Ascending aorta (tissue), 2 donors: ENCODE measurements at regions of chr14 and their contacts with region 1.

Region 1: GRCh38 chr14:90527978-90528377 is 131.1 kb downstream of the CALM1 start:
- DNase-seq: no peak
- H3K4me3 ChIP-seq: no peak overlapping the region
- H3K27ac ChIP-seq: no peak overlapping the region
- H3K4me1 ChIP-seq: peaks cover 15 to 19% of the 10 kb centered on the region in 2 donors
- H3K27me3 ChIP-seq: no peaks in the 10 kb centered on the region
- CTCF ChIP-seq: no peak

Region 2: DNA sequence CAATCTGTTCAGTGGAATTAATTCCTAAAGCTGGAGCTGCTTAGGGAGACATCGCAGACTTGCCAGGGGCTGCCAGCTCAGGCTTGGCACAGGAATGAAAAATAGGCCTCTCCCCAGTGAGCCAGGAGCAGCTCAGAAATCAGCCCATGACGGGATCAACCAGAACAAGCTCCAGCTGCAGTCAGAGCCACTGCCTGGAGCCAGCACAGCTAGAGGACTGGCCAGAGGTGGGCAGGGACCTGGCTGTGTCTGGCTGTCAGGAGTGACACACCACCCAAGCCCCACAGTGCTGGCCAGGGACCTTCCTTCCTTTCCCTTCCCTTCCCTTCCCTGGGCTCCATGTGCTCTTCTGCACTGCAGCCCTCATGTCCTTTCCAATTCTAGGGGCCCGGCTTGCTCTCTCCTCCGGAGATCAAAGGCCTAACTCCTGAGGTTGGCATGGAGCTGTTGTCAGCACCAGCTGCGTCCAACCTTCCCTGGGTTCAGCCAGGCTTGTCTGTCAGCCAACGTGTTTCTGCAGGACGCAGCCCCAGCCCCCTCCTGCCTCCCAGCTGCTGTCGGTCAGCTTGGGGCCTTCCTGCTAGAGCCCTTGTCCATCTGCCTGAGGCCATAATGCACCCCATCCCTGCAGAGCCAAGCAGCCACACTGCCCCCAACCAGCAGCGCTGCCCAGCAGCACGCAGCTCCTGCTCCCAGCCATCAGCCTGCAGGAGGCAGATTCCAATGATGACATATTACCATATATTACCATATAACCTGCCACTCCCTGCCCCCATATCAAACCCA is 18.2 kb after region 1 on chr14:
- intact Hi-C with region 1: loop called (anchors 2 kb)
- DNase-seq: peak; percentile 41 to 88
- H3K4me3 ChIP-seq: peak overlapping the region in 1 of 2 donors; percentile 19
- H3K27ac ChIP-seq: peak overlapping the region; percentile 83 to 84
- H3K4me1 ChIP-seq: peaks cover 12 to 22% of the 10 kb centered on the region in 2 donors
- H3K27me3 ChIP-seq: no peaks in the 10 kb centered on the region
- CTCF ChIP-seq: no peak

Region 3: GRCh38 chr14:90912671-90913070 is 384.7 kb after region 1 on chr14:
- intact Hi-C with region 1: no loop called
- DNase-seq: no peak
- H3K4me3 ChIP-seq: no peak overlapping the region
- H3K27ac ChIP-seq: no peak overlapping the region
- H3K4me1 ChIP-seq: no peaks in the 10 kb centered on the region
- H3K27me3 ChIP-seq: no peaks in the 10 kb centered on the region
- CTCF ChIP-seq: no peak